ENCODE measurements at regions of chr13 and their contacts with region 1.

Region 1: GRCh38 chr13:99959538-99960230 is 11.9 kb downstream of the ZIC5 start:
- DNase-seq: no peak
- H3K4me3 ChIP-seq: peak overlapping the region in 2 of 4 donors; percentile 8 to 35
- H3K27ac ChIP-seq: no peak overlapping the region
- H3K4me1 ChIP-seq: peaks cover 18 to 38% (median 32%) of the 10 kb centered on the region in 4 donors
- H3K27me3 ChIP-seq: peaks cover 100% of the 10 kb centered on the region
- CTCF ChIP-seq: no peak
- EP300 ChIP-seq: no peak
- POLR2A ChIP-seq: no peak

Region 2: GRCh38 chr13:100075700-100076587 is 116.3 kb after region 1 on chr13:
- in situ Hi-C with region 1: no loop called
- intact Hi-C with region 1: no loop called
- DNase-seq: no peak
- H3K4me3 ChIP-seq: no peak overlapping the region
- H3K27ac ChIP-seq: no peak overlapping the region
- H3K4me1 ChIP-seq: no peaks in the 10 kb centered on the region
- H3K27me3 ChIP-seq: no peaks in the 10 kb centered on the region
- CTCF ChIP-seq: no peak
- EP300 ChIP-seq: no peak
- POLR2A ChIP-seq: no peak

Region 3: GRCh38 chr13:100828226-100828625 is 868.5 kb after region 1 on chr13:
- in situ Hi-C with region 1: no loop called
- intact Hi-C with region 1: loop called (anchors 5 kb)
- DNase-seq: no peak
- H3K4me3 ChIP-seq: no peak overlapping the region
- H3K27ac ChIP-seq: no peak overlapping the region
- H3K4me1 ChIP-seq: no peaks in the 10 kb centered on the region
- H3K27me3 ChIP-seq: no peaks in the 10 kb centered on the region
- CTCF ChIP-seq: no peak
- EP300 ChIP-seq: no peak
- POLR2A ChIP-seq: no peak